CD8-positive, alpha-beta T cell (primary cell): ENCODE measurements at regions of chr5 and their contacts with region 1.

Region 1: GRCh38 chr5:132386644-132387286 is 17.3 kb downstream of the SLC22A5 start:
- DNase-seq: peak; percentile 64 to 89 (median 75)
- ATAC-seq: peak; percentile 95
- H3K4me3 ChIP-seq: no peak overlapping the region
- H3K4me3 Mint-ChIP-seq: no peak overlapping the region
- H3K27ac ChIP-seq: no peak overlapping the region
- H3K27ac Mint-ChIP-seq: no peak overlapping the region
- H3K4me1 ChIP-seq: peaks cover 19% of the 10 kb centered on the region
- H3K4me1 Mint-ChIP-seq: peaks cover 20% of the 10 kb centered on the region
- H3K27me3 ChIP-seq: no peaks in the 10 kb centered on the region
- H3K27me3 Mint-ChIP-seq: no peaks in the 10 kb centered on the region
- CTCF ChIP-seq: peak; percentile 82

Region 2: GRCh38 chr5:132064738-132065331 is 321.9 kb before region 1 on chr5:
- CTCF ChIA-PET with region 1: no interaction called
- POLR2A ChIA-PET with region 1: no interaction called
- intact Hi-C with region 1: loop called in 1 of 2 experiments (anchors 10 kb)
- DNase-seq: peak; percentile 56 to 85 (median 80)
- ATAC-seq: peak; percentile 77
- H3K4me3 ChIP-seq: no peak overlapping the region
- H3K4me3 Mint-ChIP-seq: no peak overlapping the region
- H3K27ac ChIP-seq: no peak overlapping the region
- H3K27ac Mint-ChIP-seq: no peak overlapping the region
- H3K4me1 ChIP-seq: no peaks in the 10 kb centered on the region
- H3K4me1 Mint-ChIP-seq: peaks cover 2% of the 10 kb centered on the region
- H3K27me3 ChIP-seq: no peaks in the 10 kb centered on the region
- H3K27me3 Mint-ChIP-seq: no peaks in the 10 kb centered on the region
- CTCF ChIP-seq: peak; percentile 97

Region 3: DNA sequence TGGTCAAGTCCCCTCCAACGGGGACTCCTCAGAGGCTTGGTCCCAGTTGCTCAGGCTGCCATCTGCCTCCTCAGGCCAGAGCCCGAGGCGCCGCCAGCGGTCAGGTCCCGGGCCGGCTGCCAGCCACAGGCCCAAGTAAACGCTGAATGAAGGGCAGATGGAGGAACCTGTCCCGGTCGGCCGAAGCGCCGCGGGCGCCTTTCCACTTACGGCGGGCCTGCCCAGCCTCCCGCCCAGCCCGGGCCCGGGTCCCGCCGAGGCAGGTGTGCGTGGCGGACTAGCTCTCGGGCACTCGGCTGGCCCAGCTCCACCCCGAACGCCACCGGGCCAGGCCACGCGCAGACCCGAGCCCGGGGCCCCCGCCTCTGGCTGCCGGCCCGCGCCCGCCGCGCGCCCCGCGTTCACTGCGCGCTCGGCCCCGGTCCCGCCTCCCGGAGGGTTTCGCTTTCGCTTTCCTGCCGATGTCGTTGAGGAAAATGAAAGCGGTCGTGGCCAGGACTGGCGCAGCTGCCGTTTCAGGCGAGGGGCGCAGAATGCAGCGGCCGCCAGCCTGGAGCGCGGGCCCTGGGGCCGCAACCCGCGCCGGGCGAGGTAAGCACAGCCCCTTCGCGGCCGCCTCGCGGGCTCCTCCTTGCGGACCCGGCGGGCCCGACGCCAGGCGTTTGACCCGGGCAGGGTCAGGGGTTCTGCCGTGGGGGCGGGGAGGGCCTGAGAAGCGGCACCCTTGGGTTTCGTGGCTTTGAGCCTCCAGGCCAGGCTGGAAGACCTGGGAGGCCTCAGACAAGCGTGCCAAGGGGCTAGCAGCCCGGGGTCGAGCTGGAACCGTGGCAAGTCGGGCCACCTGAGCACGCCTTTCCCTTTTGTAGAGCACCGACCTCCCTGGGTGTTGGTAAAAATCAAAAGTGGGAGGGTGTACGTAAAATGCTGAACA is 24.0 kb after region 1 on chr5:
- CTCF ChIA-PET with region 1: interaction called, 31 read pairs
- POLR2A ChIA-PET with region 1: interaction called, 7 read pairs
- intact Hi-C with region 1: loop called (anchors 1 to 2 kb)
- DNase-seq: peak; percentile 61 to 93 (median 80)
- ATAC-seq: peak; percentile 66
- H3K4me3 ChIP-seq: peak overlapping the region; percentile 73 to 94
- H3K4me3 Mint-ChIP-seq: peak overlapping the region; percentile 95
- H3K27ac ChIP-seq: peak overlapping the region; percentile 96 to 98
- H3K27ac Mint-ChIP-seq: peak overlapping the region; percentile 98
- H3K4me1 ChIP-seq: peaks cover 79% of the 10 kb centered on the region
- H3K4me1 Mint-ChIP-seq: peaks cover 80% of the 10 kb centered on the region
- H3K27me3 ChIP-seq: no peaks in the 10 kb centered on the region
- H3K27me3 Mint-ChIP-seq: no peaks in the 10 kb centered on the region
- CTCF ChIP-seq: peak; percentile 44

Region 4: DNA sequence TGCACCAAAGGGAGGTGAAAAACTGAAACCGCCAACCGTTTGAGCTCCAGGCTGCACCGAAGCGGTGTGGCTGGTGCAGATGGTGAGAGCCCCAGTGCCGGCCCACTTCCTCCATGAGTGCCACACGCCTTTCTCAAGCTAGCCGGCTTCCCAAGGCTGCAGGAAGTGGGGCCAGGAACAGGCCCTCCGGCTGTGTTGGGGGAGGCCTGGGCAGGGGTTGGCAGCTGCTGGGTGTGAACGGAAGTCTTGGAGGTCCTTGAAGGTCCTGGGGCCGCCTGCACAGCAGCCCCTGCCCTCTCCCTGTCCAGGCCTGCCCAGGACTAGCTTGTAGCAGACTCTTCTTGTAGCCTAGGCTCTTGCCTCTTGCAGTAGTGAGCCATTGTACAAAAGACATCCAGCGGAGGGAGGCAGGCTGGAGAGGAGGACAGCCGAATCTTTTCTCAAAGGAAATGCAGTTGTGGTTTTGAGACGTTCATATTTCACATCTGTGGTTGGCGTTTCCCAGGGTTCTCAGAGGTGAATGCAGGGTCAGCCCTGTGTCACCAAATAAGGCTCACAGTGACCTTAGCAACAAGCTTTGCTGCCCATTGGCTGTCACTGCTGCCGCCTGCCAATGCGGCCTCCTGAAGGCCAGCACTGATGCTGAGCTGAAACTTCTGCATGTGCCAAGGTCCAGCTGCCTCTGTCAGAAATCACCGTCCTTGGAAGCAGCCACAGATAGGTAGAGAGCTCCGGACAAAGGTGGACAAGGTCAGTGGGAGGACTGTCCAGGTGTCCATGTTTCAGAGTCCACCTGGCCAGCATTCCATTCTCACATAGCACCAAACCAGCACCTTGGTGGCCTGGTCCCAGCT is 79.9 kb after region 1 on chr5:
- CTCF ChIA-PET with region 1: interaction called, 21 read pairs
- POLR2A ChIA-PET with region 1: interaction called, 4 read pairs
- intact Hi-C with region 1: no loop called
- DNase-seq: peak; percentile 53 to 92 (median 74)
- ATAC-seq: peak; percentile 63
- H3K4me3 ChIP-seq: peak overlapping the region; percentile 25 to 28
- H3K4me3 Mint-ChIP-seq: peak overlapping the region; percentile 68
- H3K27ac ChIP-seq: peak overlapping the region; percentile 51 to 85
- H3K27ac Mint-ChIP-seq: peak overlapping the region; percentile 95
- H3K4me1 ChIP-seq: peaks cover 88% of the 10 kb centered on the region
- H3K4me1 Mint-ChIP-seq: peaks cover 96% of the 10 kb centered on the region
- H3K27me3 ChIP-seq: no peaks in the 10 kb centered on the region
- H3K27me3 Mint-ChIP-seq: no peaks in the 10 kb centered on the region
- CTCF ChIP-seq: no peak

Region 5: DNA sequence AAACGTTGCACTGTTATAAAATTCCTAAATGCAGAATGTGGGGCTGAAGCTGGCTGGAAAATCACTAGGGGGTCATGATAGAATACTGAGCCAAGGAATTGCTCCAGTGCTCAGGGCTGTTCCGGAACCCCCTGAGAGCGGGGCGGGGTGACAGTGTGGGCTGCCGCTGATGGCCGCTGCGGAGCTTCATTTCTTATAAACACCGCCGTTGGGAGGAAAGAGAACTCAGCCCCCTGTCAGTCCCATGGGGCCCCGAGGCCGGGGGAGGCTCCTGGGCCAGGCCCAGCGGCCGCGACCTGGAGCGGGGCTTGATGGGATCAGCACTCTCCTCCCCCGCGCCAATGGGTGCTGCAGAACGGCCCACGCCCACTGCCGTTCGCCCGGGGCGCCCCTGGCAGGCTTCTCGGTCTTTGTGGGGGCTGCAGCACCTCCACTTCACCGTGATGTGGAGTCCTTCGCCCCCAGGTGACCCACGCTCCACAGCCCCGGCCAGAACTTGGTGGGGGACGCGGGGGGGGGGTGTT is 109.0 kb after region 1 on chr5:
- CTCF ChIA-PET with region 1: interaction called, 425 read pairs
- POLR2A ChIA-PET with region 1: interaction called, 7 read pairs
- intact Hi-C with region 1: no loop called
- DNase-seq: peak in 8 of 9 experiments; percentile 54 to 86 (median 70)
- ATAC-seq: peak; percentile 32
- H3K4me3 ChIP-seq: peak overlapping the region; percentile 67 to 86
- H3K4me3 Mint-ChIP-seq: peak overlapping the region; percentile 97
- H3K27ac ChIP-seq: peak overlapping the region; percentile 68 to 86
- H3K27ac Mint-ChIP-seq: peak overlapping the region; percentile 94
- H3K4me1 ChIP-seq: peaks cover 69% of the 10 kb centered on the region
- H3K4me1 Mint-ChIP-seq: peaks cover 69% of the 10 kb centered on the region
- H3K27me3 ChIP-seq: no peaks in the 10 kb centered on the region
- H3K27me3 Mint-ChIP-seq: no peaks in the 10 kb centered on the region
- CTCF ChIP-seq: no peak

Region 6: GRCh38 chr5:132526290-132526973 is 139.7 kb after region 1 on chr5:
- CTCF ChIA-PET with region 1: interaction called, 16 read pairs
- POLR2A ChIA-PET with region 1: no interaction called
- intact Hi-C with region 1: no loop called
- DNase-seq: peak in 6 of 9 experiments; percentile 24 to 69 (median 49)
- ATAC-seq: peak; percentile 72
- H3K4me3 ChIP-seq: no peak overlapping the region
- H3K4me3 Mint-ChIP-seq: no peak overlapping the region
- H3K27ac ChIP-seq: no peak overlapping the region
- H3K27ac Mint-ChIP-seq: no peak overlapping the region
- H3K4me1 ChIP-seq: peaks cover 8% of the 10 kb centered on the region
- H3K4me1 Mint-ChIP-seq: peaks cover 9% of the 10 kb centered on the region
- H3K27me3 ChIP-seq: no peaks in the 10 kb centered on the region
- H3K27me3 Mint-ChIP-seq: no peaks in the 10 kb centered on the region
- CTCF ChIP-seq: peak; percentile 97

Region 7: DNA sequence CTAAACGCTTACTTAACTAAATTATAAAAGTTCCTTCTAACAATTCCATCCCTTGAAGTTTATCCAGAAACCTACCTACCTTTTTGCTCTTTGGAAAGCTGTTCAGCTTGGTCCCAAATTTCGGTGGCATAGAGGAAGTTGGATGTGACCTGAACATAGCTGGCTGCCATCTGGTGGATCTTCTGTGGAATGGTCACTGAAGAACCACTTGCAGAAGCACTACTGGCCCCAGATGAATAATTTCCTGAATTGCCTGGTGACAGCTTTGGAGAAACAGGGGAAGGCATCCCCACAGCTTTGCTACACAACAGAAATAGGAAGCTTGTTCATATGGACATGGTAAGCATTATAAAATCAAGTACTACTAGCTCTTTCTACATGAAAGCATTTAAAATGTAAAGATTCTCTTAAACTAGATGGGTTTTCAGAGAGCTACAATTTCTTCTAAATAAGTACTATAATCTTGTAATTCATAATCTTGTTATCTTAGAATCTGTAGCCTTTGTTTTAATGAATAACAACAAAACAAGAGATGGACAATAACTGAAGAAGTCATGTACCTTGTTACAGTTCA is 496.6 kb after region 1 on chr5:
- CTCF ChIA-PET with region 1: interaction called, 5 read pairs
- POLR2A ChIA-PET with region 1: no interaction called
- intact Hi-C with region 1: loop called (anchors 1 to 2 kb)
- DNase-seq: peak in 5 of 9 experiments; percentile 16 to 69 (median 24)
- ATAC-seq: peak; percentile 69
- H3K4me3 ChIP-seq: no peak overlapping the region
- H3K4me3 Mint-ChIP-seq: no peak overlapping the region
- H3K27ac ChIP-seq: no peak overlapping the region
- H3K27ac Mint-ChIP-seq: peak overlapping the region; percentile 11
- H3K4me1 ChIP-seq: no peaks in the 10 kb centered on the region
- H3K4me1 Mint-ChIP-seq: peaks cover 3% of the 10 kb centered on the region
- H3K27me3 ChIP-seq: no peaks in the 10 kb centered on the region
- H3K27me3 Mint-ChIP-seq: no peaks in the 10 kb centered on the region
- CTCF ChIP-seq: peak; percentile 46